Activated B cell treated with CpG ODN at 0.5 μM for 24 hours (primary cell): ENCODE measurements at regions of chr9 and their contacts with region 1.

Region 1: GRCh38 chr9:98192503-98193335 is at the start of gene CORO2A:
- DNase-seq: peak; percentile 70
- ATAC-seq: peak; percentile 91
- H3K4me3 Mint-ChIP-seq: peak within 1 kb of the TSS; percentile 88
- H3K27ac Mint-ChIP-seq: no peak within 1 kb of the TSS
- H3K4me1 Mint-ChIP-seq: peaks cover 5% of the 10 kb centered on the region
- H3K27me3 Mint-ChIP-seq: no peaks in the 10 kb centered on the region
- CTCF ChIP-seq: no peak
- total RNA-seq, gene CORO2A: 0.59 and 0.78 TPM in 2 replicates

Region 2: DNA sequence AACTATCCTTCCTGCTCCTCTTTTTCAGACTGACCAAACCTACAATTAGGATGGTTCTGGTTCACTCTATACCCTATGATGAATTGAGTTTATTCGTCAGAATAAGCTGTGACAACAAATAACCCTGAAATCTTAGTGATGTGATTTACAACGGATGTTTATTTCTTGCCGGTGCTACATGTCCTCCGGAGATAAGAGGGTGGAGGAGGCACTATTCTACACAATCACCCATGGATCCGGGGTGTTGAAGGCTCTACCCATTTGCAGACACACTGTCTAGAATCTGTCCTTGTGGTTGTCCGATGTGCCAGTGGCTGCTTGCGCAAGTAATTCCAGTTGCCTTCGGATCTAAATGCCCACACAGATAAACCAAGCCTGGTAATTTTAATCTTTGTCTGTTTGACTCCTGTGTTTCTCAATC is 1617.8 kb before region 1 on chr9:
- CTCF ChIA-PET with region 1: no interaction called
- POLR2A ChIA-PET with region 1: interaction called, 10 read pairs
- intact Hi-C with region 1: no loop called
- DNase-seq: no peak
- ATAC-seq: no peak
- H3K4me3 Mint-ChIP-seq: no peak overlapping the region
- H3K27ac Mint-ChIP-seq: no peak overlapping the region
- H3K4me1 Mint-ChIP-seq: no peaks in the 10 kb centered on the region
- H3K27me3 Mint-ChIP-seq: peaks cover 20% of the 10 kb centered on the region
- CTCF ChIP-seq: no peak

Region 3: GRCh38 chr9:98087420-98088354 is 105.0 kb before region 1 on chr9:
- CTCF ChIA-PET with region 1: no interaction called
- POLR2A ChIA-PET with region 1: no interaction called
- intact Hi-C with region 1: loop called (anchors 5 kb)
- DNase-seq: peak; percentile 74
- ATAC-seq: peak; percentile 84
- H3K4me3 Mint-ChIP-seq: peak overlapping the region; percentile 74
- H3K27ac Mint-ChIP-seq: peak overlapping the region; percentile 50
- H3K4me1 Mint-ChIP-seq: peaks cover 25% of the 10 kb centered on the region
- H3K27me3 Mint-ChIP-seq: no peaks in the 10 kb centered on the region
- CTCF ChIP-seq: no peak

Region 4: DNA sequence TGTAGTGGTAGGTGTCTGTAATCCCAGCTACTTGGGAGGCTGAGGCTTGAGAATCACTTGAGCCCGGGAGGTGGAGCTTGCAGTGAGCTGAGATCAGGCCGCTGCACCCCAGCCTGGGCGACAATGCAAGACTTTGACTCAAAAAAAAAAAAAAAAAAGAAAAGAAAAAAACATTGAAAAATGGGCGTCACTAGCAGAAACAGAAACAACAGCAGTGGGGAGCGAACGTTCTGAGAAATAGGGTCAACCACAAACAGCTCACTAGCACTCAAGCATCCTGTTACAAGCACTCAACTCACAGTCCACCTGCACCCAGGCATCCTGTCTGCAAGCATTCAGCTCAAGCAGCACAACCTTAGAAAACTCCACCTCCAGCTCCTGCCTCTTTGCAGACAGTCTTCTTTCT is 90.8 kb before region 1 on chr9:
- CTCF ChIA-PET with region 1: interaction called, 3 read pairs
- POLR2A ChIA-PET with region 1: interaction called, 6 read pairs
- intact Hi-C with region 1: loop called (anchors 1 kb)
- DNase-seq: peak; percentile 32
- ATAC-seq: peak; percentile 95
- H3K4me3 Mint-ChIP-seq: peak overlapping the region; percentile 42
- H3K27ac Mint-ChIP-seq: peak overlapping the region; percentile 84
- H3K4me1 Mint-ChIP-seq: peaks cover 87% of the 10 kb centered on the region
- H3K27me3 Mint-ChIP-seq: no peaks in the 10 kb centered on the region
- CTCF ChIP-seq: no peak

Region 5: DNA sequence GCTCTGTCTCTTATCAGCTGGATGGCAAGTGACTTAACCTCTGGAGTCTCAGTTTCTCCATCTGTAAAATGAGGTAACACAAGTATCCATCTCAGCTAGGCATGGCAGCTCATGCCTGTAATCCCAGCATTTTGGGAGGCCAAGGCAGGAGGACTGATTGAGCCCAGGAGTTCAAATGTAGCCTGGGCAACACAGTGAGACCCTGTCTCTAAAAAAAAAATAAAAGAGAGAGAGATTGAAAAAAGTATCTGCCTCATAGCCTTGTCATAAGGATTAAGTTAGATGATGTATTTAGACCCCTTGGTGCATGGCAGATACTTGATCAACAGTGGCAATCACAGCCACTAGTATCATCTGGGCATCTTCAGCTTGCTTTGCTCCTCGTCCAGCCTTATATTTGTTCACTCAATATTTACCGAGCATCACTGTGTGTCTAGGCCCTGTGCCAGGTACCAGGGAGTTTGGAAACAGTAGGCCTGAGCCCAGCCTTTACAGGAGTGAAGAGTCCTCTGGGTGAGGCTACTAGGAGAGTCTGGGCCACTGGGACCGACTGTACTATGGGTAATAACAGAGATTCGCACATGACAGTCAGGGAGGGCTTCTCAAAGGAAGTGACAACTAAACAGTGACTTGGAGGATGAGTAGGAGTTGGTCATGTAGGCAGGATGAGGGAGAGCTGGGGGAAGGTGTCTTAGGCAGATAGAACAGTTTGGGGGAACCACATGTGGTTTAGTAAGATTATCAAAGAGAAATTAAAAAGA is 34.5 kb before region 1 on chr9:
- CTCF ChIA-PET with region 1: no interaction called
- POLR2A ChIA-PET with region 1: no interaction called
- intact Hi-C with region 1: no loop called
- DNase-seq: no peak
- ATAC-seq: no peak
- H3K4me3 Mint-ChIP-seq: no peak overlapping the region
- H3K27ac Mint-ChIP-seq: no peak overlapping the region
- H3K4me1 Mint-ChIP-seq: no peaks in the 10 kb centered on the region
- H3K27me3 Mint-ChIP-seq: no peaks in the 10 kb centered on the region
- CTCF ChIP-seq: no peak

Region 6: DNA sequence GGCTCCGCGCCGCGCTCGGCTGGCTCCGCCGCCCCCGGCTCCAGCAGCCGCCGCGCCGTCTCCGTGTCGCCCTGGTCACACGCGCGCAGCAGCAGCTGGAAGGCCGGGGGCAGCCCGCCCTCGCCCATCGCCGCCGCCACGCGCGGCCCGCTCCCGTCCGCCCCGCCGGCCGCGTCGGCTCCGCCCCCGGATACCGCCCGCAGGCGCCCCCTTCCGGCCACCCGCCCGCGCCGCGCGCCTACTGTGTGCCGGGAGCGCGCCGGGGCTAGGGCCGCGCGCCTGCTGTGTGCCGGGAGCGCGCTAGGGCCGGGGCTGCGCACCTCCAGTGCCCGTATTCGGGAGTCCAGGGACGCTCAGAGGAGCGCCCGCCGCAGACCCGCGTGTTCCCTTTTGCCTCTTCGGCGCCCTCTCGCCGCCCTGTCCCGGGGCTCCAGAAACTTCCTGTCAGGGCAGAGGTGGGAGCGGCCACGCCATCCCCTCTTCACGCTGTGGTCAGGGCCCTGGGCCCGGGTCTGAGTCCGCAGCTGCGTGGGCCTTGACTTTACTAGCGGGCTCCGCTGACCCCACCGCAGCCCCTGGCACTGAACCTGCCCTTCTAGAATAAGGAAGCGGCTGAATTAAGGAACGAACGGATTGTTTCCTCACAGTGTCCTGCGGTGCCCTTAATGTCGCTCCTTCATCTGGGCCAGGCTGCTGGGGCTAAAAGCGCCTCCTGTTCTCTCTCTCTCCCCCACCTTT is 603.8 kb after region 1 on chr9 and contains the start of gene ANKS6:
- CTCF ChIA-PET with region 1: no interaction called
- POLR2A ChIA-PET with region 1: no interaction called
- intact Hi-C with region 1: loop called (anchors 5 kb)
- DNase-seq: peak; percentile 91
- ATAC-seq: peak; percentile 94
- H3K4me3 Mint-ChIP-seq: peak within 1 kb of the TSS; percentile 87
- H3K27ac Mint-ChIP-seq: peak within 1 kb of the TSS; percentile 47
- H3K4me1 Mint-ChIP-seq: peaks cover 16% of the 10 kb centered on the region
- H3K27me3 Mint-ChIP-seq: peaks cover 1% of the 10 kb centered on the region
- CTCF ChIP-seq: no peak
- total RNA-seq, gene ANKS6: 12.1 and 14.8 TPM in 2 replicates